CD4-positive, alpha-beta memory T cell (primary cell): ENCODE measurements at regions of chr3 and their contacts with region 1.

Region 1: GRCh38 chr3:142987080-142987700 is 14.2 kb upstream of the U2SURP start:
- DNase-seq: peak in 4 of 5 donors; percentile 41 to 51 (median 42)
- H3K4me3 ChIP-seq: no peak overlapping the region
- H3K4me3 Mint-ChIP-seq: no peak overlapping the region
- H3K27ac ChIP-seq: no peak overlapping the region
- H3K27ac Mint-ChIP-seq: no peak overlapping the region
- H3K4me1 ChIP-seq: no peaks in the 10 kb centered on the region
- H3K4me1 Mint-ChIP-seq: no peaks in the 10 kb centered on the region
- H3K27me3 ChIP-seq: no peaks in the 10 kb centered on the region
- H3K27me3 Mint-ChIP-seq: peaks cover 10 to 13% of the 10 kb centered on the region in 2 donors

Region 2: GRCh38 chr3:142129516-142130171 is 857.5 kb before region 1 on chr3:
- CTCF ChIA-PET with region 1: no interaction called
- POLR2A ChIA-PET with region 1: no interaction called
- intact Hi-C with region 1: loop called (anchors 5 kb)
- DNase-seq: no peak
- H3K4me3 ChIP-seq: no peak overlapping the region
- H3K4me3 Mint-ChIP-seq: no peak overlapping the region
- H3K27ac ChIP-seq: no peak overlapping the region
- H3K27ac Mint-ChIP-seq: no peak overlapping the region
- H3K4me1 ChIP-seq: no peaks in the 10 kb centered on the region
- H3K4me1 Mint-ChIP-seq: peaks cover 0 to 4% (median 2%) of the 10 kb centered on the region in 4 donors
- H3K27me3 ChIP-seq: no peaks in the 10 kb centered on the region
- H3K27me3 Mint-ChIP-seq: no peaks in the 10 kb centered on the region

Region 3: DNA sequence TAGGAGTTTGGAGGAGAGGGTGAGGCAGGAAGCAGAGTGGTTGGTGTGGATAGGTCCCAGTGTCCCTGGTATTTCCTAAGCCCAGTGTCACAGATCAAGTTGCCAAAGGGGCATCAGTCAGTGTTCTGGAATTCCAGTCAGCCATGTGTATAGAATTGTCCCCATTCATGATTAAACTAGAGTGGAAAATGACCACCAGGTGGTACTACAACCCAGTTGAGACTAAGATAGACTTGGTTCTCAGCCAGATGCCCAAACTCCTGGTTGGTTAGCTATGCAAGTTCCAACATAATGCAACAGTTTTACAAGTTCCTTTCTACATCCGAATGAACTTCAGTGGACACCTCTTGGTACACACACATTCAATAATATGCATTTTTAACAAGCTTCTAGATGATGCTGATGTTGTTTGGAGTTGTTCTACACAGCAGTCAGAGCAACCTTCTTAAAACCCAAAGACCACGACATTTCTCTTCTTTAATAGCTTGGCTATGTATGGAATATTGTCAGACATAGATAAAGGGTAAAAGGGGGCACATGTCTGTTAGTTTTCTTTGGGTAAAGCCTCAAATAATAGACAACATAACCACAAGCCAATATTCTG is 400.3 kb before region 1 on chr3:
- CTCF ChIA-PET with region 1: interaction called, 33 read pairs
- POLR2A ChIA-PET with region 1: interaction called, 4 read pairs
- intact Hi-C with region 1: loop called (anchors 1 kb)
- DNase-seq: peak in 4 of 5 donors; percentile 39 to 53 (median 46)
- H3K4me3 ChIP-seq: no peak overlapping the region
- H3K4me3 Mint-ChIP-seq: no peak overlapping the region
- H3K27ac ChIP-seq: no peak overlapping the region
- H3K27ac Mint-ChIP-seq: no peak overlapping the region
- H3K4me1 ChIP-seq: no peaks in the 10 kb centered on the region
- H3K4me1 Mint-ChIP-seq: no peaks in the 10 kb centered on the region
- H3K27me3 ChIP-seq: no peaks in the 10 kb centered on the region
- H3K27me3 Mint-ChIP-seq: peaks cover 11 to 14% of the 10 kb centered on the region in 2 donors

Region 4: GRCh38 chr3:142828703-142829305 is 158.4 kb before region 1 on chr3:
- CTCF ChIA-PET with region 1: interaction called, 3 read pairs
- POLR2A ChIA-PET with region 1: no interaction called
- intact Hi-C with region 1: loop called (anchors 2 kb)
- DNase-seq: peak; percentile 15 to 45 (median 29)
- H3K4me3 ChIP-seq: no peak overlapping the region
- H3K4me3 Mint-ChIP-seq: no peak overlapping the region
- H3K27ac ChIP-seq: no peak overlapping the region
- H3K27ac Mint-ChIP-seq: no peak overlapping the region
- H3K4me1 ChIP-seq: no peaks in the 10 kb centered on the region
- H3K4me1 Mint-ChIP-seq: peaks cover 0 to 2% (median 0%) of the 10 kb centered on the region in 4 donors
- H3K27me3 ChIP-seq: no peaks in the 10 kb centered on the region
- H3K27me3 Mint-ChIP-seq: peaks cover 6 to 24% of the 10 kb centered on the region in 2 donors